OCI-LY7 (cell line): ENCODE measurements at regions of chr7 and their contacts with region 1.

Region 1: GRCh38 chr7:112449902-112450806 is at the start of gene IFRD1:
- DNase-seq: peak; percentile 97
- H3K4me3 ChIP-seq: peak within 1 kb of the TSS; percentile 95
- H3K27ac ChIP-seq: peak within 1 kb of the TSS; percentile 74
- H3K4me1 ChIP-seq: peaks cover 20% of the 10 kb centered on the region
- CTCF ChIP-seq: no peak
- total RNA-seq, gene IFRD1: 49.1 and 54.9 TPM in 2 replicates

Region 2: GRCh38 chr7:112390167-112390566 is 60.0 kb before region 1 on chr7:
- CTCF ChIA-PET with region 1: no interaction called
- POLR2A ChIA-PET with region 1: interaction called, 5 read pairs
- intact Hi-C with region 1: loop called (anchors 2 kb)
- DNase-seq: no peak
- H3K4me3 ChIP-seq: no peak overlapping the region
- H3K27ac ChIP-seq: no peak overlapping the region
- H3K4me1 ChIP-seq: peaks cover 11% of the 10 kb centered on the region
- CTCF ChIP-seq: no peak

Region 3: DNA sequence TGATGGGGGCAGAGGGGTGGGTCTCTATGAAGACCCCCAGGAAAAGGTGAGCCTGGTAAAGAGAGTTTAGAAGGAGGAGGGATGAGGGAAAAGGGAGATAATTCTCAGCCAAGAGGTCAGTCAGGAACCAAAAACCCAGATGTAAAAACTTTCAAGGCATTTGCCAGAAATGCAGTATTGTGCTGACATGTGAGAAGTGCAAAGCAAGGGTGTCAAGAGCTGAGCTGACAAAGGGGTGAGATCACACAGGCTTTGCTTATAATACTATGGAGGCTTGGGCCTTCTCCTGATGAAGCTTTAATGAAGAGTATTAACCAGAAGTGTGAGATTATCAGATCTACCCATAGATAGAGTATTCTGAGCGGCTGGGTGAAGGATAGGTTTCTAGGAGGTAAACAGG is 22.2 kb before region 1 on chr7:
- CTCF ChIA-PET with region 1: no interaction called
- POLR2A ChIA-PET with region 1: interaction called, 71 read pairs
- intact Hi-C with region 1: no loop called
- DNase-seq: no peak
- H3K4me3 ChIP-seq: no peak overlapping the region
- H3K27ac ChIP-seq: no peak overlapping the region
- H3K4me1 ChIP-seq: peaks cover 29% of the 10 kb centered on the region
- CTCF ChIP-seq: no peak

Region 4: DNA sequence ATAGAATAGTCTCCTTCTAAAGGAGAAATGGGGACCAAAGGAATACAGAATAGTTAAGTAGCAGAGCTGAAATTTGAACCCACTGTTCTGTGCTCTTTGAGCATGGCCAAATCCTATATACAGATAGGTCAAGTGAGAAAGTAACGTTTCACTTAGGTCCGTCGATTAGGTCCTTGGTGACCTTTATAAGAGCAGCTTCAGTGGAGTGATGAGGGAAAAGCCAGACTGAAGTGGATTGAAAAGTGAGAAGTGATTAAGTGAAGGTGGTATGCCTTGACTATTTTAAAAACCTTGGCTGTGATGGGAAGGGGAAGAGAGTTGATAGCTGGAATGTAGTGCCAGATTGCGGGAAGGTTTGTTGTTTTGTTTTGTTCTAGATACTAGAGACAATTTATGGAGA is 20.0 kb after region 1 on chr7:
- CTCF ChIA-PET with region 1: no interaction called
- POLR2A ChIA-PET with region 1: interaction called, 81 read pairs
- intact Hi-C with region 1: loop called (anchors 2 kb)
- DNase-seq: no peak
- H3K4me3 ChIP-seq: no peak overlapping the region
- H3K27ac ChIP-seq: no peak overlapping the region
- H3K4me1 ChIP-seq: no peaks in the 10 kb centered on the region
- CTCF ChIP-seq: no peak

Region 5: DNA sequence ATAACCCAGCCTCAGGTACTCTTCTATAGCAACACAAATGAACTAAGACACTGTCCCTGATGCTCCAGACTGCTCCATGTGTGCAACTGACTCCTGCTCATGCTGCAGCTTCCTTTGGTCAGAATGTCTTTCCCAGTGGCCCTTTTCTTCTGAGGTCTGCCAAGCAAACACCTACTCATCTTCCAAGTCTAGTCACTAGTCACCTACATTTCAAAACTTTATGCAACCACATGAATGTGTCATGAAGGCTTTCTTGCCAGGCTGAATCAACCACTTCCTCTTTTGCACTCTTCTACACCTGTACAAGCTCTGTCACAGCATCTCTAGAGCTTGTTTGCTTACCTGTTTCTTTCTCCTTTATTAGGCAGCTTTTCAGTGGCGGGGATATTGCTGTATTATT is 106.5 kb after region 1 on chr7:
- CTCF ChIA-PET with region 1: no interaction called
- POLR2A ChIA-PET with region 1: no interaction called
- intact Hi-C with region 1: no loop called
- DNase-seq: peak; percentile 24
- H3K4me3 ChIP-seq: no peak overlapping the region
- H3K27ac ChIP-seq: no peak overlapping the region
- H3K4me1 ChIP-seq: no peaks in the 10 kb centered on the region
- CTCF ChIP-seq: no peak

Region 6: DNA sequence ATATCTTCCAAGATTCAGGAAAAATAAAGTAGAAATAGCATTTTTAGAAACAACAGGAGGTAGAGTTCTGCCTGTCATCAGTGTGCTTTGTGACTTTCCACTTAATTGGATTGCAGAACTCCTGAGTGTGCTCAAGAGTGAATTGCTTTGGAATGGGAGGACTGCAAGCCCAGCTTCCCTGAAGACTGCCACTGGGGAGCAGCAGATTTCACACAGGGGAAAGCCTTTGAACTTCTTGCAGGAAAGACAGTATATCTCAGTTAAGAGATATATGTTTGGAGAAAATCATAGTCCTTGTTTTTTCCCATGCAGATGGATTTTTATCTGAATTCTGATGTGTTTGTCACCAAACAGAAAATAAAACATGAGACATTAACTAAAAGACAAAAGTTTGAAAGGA is 215.6 kb after region 1 on chr7:
- CTCF ChIA-PET with region 1: no interaction called
- POLR2A ChIA-PET with region 1: no interaction called
- intact Hi-C with region 1: no loop called
- DNase-seq: no peak
- H3K4me3 ChIP-seq: no peak overlapping the region
- H3K27ac ChIP-seq: no peak overlapping the region
- H3K4me1 ChIP-seq: no peaks in the 10 kb centered on the region
- CTCF ChIP-seq: no peak

Region 7: GRCh38 chr7:112819536-112819935 is 369.4 kb after region 1 on chr7:
- CTCF ChIA-PET with region 1: no interaction called
- POLR2A ChIA-PET with region 1: no interaction called
- intact Hi-C with region 1: no loop called
- DNase-seq: no peak
- H3K4me3 ChIP-seq: no peak overlapping the region
- H3K27ac ChIP-seq: no peak overlapping the region
- H3K4me1 ChIP-seq: no peaks in the 10 kb centered on the region
- CTCF ChIP-seq: no peak